Activated T-helper 1 cell treated with anti-CD3 and anti-CD28 coated beads, Interleukin-12 subunit alpha, Interleukin-12 subunit beta, Interleukin-2, Interleukin-4 antibody, amounts not matched to agents 30 ng/mL and 10 ng/mL and 1 ng/mL, durations not matched to agents 14 hours and 24 hours and 36 hours (primary cell): ENCODE measurements at regions of chr2 and their contacts with region 1.

Region 1: GRCh38 chr2:98654699-98655495 is 46.5 kb downstream of the UNC50 start:
- DNase-seq: no peak
- H3K4me3 Mint-ChIP-seq: peak overlapping the region; percentile 65
- H3K27ac Mint-ChIP-seq: peak overlapping the region; percentile 84
- H3K4me1 Mint-ChIP-seq: peaks cover 91% of the 10 kb centered on the region
- H3K27me3 Mint-ChIP-seq: no peaks in the 10 kb centered on the region

Region 2: GRCh38 chr2:98615481-98615880 is 39.4 kb before region 1 on chr2:
- intact Hi-C with region 1: no loop called
- DNase-seq: no peak
- H3K4me3 Mint-ChIP-seq: no peak overlapping the region
- H3K27ac Mint-ChIP-seq: peak overlapping the region; percentile 32
- H3K4me1 Mint-ChIP-seq: peaks cover 53% of the 10 kb centered on the region
- H3K27me3 Mint-ChIP-seq: no peaks in the 10 kb centered on the region

Region 3: GRCh38 chr2:98634401-98635092 is 20.4 kb before region 1 on chr2:
- intact Hi-C with region 1: loop called (anchors 2 kb)
- DNase-seq: peak; percentile 26
- H3K4me3 Mint-ChIP-seq: peak overlapping the region; percentile 30
- H3K27ac Mint-ChIP-seq: peak overlapping the region; percentile 70
- H3K4me1 Mint-ChIP-seq: peaks cover 40% of the 10 kb centered on the region
- H3K27me3 Mint-ChIP-seq: no peaks in the 10 kb centered on the region

Region 4: GRCh38 chr2:98691303-98691702 is 36.4 kb after region 1 on chr2:
- intact Hi-C with region 1: loop called (anchors 1 kb)
- DNase-seq: no peak
- H3K4me3 Mint-ChIP-seq: no peak overlapping the region
- H3K27ac Mint-ChIP-seq: peak overlapping the region; percentile 71
- H3K4me1 Mint-ChIP-seq: peaks cover 75% of the 10 kb centered on the region
- H3K27me3 Mint-ChIP-seq: no peaks in the 10 kb centered on the region

Region 5: GRCh38 chr2:98731041-98731893 is 76.4 kb after region 1 on chr2 and contains the start of gene MGAT4A:
- intact Hi-C with region 1: loop called (anchors 1 kb)
- DNase-seq: peak; percentile 82
- H3K4me3 Mint-ChIP-seq: peak within 1 kb of the TSS; percentile 91
- H3K27ac Mint-ChIP-seq: peak within 1 kb of the TSS; percentile 87
- H3K4me1 Mint-ChIP-seq: peaks cover 80% of the 10 kb centered on the region
- H3K27me3 Mint-ChIP-seq: no peaks in the 10 kb centered on the region
- total RNA-seq, gene MGAT4A: 47.0 and 49.7 TPM in 2 replicates

Region 6: GRCh38 chr2:98923244-98923940 is 268.5 kb after region 1 on chr2:
- intact Hi-C with region 1: loop called (anchors 5 kb)
- DNase-seq: no peak
- H3K4me3 Mint-ChIP-seq: no peak overlapping the region
- H3K27ac Mint-ChIP-seq: no peak overlapping the region
- H3K4me1 Mint-ChIP-seq: no peaks in the 10 kb centered on the region
- H3K27me3 Mint-ChIP-seq: peaks cover 25% of the 10 kb centered on the region

Region 7: DNA sequence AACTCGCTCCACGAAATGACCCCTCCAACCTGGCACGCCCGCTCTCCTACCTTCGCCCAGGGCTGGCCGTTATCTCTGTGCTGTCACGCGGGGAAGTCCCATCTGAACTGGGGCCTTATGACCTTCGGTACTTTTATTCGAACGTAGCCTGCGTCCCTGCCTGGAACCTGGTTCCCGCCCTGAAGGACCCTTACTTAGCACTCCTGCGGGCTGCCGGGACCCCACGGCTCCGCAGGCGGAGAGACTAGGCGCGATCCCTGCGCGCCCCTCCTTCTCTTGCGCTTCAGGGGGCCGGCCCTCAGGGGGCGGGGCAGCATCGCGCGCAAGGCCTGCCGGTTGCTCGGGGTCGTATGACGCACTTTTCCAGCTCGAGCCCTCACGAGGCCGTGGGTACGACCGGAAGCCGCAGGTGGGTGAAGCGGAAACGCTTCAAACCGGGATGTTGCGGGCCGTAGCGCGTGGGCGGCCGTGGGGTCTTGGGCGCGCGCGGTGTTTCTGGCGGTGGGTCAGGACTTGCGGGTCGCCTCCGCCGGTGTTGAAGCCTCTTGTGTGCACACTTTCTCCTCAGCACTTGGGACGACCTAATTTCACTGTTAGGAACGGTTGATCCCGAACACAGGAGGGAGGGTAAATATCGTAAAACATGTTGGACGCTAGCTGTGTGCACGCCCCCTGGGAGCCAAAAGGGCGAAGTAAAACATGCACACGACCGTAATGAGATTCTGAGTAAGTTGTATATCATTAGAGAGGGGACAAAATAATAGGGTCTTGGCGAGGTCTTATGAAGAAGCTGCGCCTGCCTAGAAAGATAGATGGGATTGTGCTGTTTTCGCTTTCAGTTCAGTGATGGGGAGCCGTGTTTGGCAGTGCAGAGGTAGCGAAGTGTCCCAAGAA is 500.0 kb after region 1 on chr2 and contains the starts of genes LIPT1 and TSGA10:
- intact Hi-C with region 1: loop called (anchors 5 kb)
- DNase-seq: peak; percentile 92
- H3K4me3 Mint-ChIP-seq: no peak within 1 kb of the TSS
- H3K27ac Mint-ChIP-seq: peak within 1 kb of the TSS; percentile 95
- H3K4me1 Mint-ChIP-seq: peaks cover 31% of the 10 kb centered on the region
- H3K27me3 Mint-ChIP-seq: no peaks in the 10 kb centered on the region
- total RNA-seq, gene LIPT1: 2.2 and 3.3 TPM in 2 replicates
- total RNA-seq, gene TSGA10: 3.0 and 4.1 TPM in 2 replicates

Region 8: DNA sequence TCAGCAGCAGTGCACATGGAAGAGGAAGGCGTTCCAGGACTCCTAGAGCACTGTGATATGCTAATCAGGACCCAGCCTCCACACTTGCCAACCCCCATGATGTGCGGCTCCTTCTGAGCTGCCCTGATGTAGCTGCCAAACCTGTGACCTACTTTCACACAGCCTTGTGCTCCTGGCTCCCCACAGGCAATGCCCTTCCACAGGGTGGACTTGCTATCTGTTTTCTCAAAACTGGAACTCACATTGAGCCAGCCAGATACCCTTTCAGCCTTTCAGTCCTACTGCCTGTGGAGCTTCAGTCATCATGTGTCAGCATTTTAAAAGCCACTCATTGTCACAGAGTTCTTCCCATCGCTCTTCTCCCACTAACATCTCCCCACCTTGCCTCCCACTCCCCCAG is 1305.9 kb after region 1 on chr2:
- intact Hi-C with region 1: no loop called
- DNase-seq: no peak
- H3K4me3 Mint-ChIP-seq: no peak overlapping the region
- H3K27ac Mint-ChIP-seq: no peak overlapping the region
- H3K4me1 Mint-ChIP-seq: no peaks in the 10 kb centered on the region
- H3K27me3 Mint-ChIP-seq: no peaks in the 10 kb centered on the region

Region 9: GRCh38 chr2:100416935-100417710 is 1762.2 kb after region 1 on chr2 and contains the start of gene CHST10:
- intact Hi-C with region 1: loop called (anchors 5 kb)
- DNase-seq: peak; percentile 44
- H3K4me3 Mint-ChIP-seq: peak within 1 kb of the TSS; percentile 88
- H3K27ac Mint-ChIP-seq: peak within 1 kb of the TSS; percentile 66
- H3K4me1 Mint-ChIP-seq: peaks cover 13% of the 10 kb centered on the region
- H3K27me3 Mint-ChIP-seq: peaks cover 18% of the 10 kb centered on the region
- total RNA-seq, gene CHST10: 7.4 and 7.8 TPM in 2 replicates